ENCODE measurements at regions of chr12 and their contacts with region 1.

Region 1: DNA sequence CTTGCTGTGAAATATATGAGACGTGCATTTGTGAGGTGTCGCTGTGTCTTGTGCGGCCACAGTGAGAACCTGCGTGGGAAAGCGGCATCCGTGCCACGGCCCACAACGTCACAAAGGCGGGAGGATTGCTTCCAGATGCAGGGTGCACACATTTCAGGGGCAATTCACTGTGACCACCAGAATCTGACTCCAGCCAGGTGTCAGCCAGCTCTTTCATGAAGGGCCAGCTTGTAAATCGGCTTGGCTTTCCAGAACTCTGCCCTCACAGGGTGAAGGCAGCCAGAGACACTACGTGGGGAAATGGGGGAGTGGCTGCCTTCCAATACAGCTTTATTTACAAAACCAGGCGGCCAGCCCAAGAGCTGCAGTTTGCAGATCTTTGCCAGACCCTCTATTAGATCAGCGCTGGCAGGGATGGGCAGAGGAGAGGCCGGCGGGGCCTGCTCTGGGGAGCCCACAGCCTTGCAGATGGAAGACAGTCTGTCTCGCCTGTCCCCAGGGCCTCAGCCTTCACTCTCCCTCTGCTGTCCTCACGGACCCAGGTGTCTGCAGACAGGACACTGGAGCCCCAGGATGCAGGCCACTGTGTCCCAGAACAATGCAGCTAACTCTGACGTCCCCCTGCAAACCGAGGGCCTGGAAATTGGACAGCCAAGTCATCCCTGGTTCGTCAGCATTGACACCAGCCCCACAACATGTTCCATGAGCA is 53.5 kb downstream of the ADGRD1 start:
- DNase-seq: peak; percentile 92
- H3K4me3 ChIP-seq: no peak overlapping the region
- H3K27ac ChIP-seq: peak overlapping the region; percentile 31 to 82 (median 78)
- H3K4me1 ChIP-seq: peaks cover 0 to 76% (median 55%) of the 10 kb centered on the region in 4 donors
- H3K27me3 ChIP-seq: no peaks in the 10 kb centered on the region
- CTCF ChIP-seq: no peak
- EP300 ChIP-seq: peak; percentile 36 to 75 (median 47)
- POLR2A ChIP-seq: no peak

Region 2: GRCh38 chr12:130961921-130962451 is 45.2 kb before region 1 on chr12:
- intact Hi-C with region 1: loop called (anchors 2 kb)
- DNase-seq: peak; percentile 91
- H3K4me3 ChIP-seq: no peak overlapping the region
- H3K27ac ChIP-seq: peak overlapping the region; percentile 63 to 78 (median 74)
- H3K4me1 ChIP-seq: peaks cover 0 to 37% (median 18%) of the 10 kb centered on the region in 4 donors
- H3K27me3 ChIP-seq: no peaks in the 10 kb centered on the region
- CTCF ChIP-seq: no peak
- EP300 ChIP-seq: peak in 3 of 4 donors; percentile 53 to 83 (median 73)
- POLR2A ChIP-seq: no peak

Region 3: DNA sequence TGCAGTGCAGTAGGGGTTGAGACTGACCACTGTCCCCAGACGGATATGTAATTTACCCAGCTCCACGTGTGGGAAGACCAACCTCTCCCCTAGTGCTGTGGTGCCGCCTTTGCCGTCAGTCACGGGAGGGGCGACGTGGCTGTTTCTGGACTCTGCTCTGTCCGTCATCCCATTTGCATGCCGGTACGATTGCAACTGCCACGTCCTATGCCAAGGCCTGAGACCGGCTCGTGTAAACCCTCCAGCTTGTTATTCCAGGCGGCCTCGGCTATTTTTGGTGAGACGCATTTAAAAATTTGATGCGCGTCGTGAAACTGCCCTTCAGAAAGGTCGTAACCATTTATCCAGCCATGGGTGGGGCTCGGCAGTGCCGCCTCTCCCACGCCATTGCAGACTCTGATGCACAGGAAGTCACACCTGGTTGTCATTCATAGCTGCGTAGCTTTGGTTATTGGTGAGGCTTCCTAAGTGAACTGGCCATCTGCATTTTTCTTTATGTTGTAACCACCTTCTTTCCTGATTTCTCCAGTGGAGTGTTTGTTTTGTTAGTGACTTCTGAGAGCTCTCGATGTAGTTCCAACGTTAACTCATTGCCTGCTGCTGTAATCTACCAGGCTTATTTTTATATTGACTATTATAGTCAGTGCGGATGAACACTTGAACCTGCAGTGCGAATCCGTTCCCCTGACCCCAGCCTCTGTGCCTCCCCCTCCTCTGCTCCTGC is 21.6 kb after region 1 on chr12:
- intact Hi-C with region 1: loop called (anchors 2 kb)
- DNase-seq: no peak
- H3K4me3 ChIP-seq: no peak overlapping the region
- H3K27ac ChIP-seq: peak overlapping the region in 1 of 4 donors; percentile 50
- H3K4me1 ChIP-seq: peaks cover 0 to 17% (median 16%) of the 10 kb centered on the region in 4 donors
- H3K27me3 ChIP-seq: peaks cover 0 to 2% (median 0%) of the 10 kb centered on the region in 3 donors
- CTCF ChIP-seq: no peak
- EP300 ChIP-seq: no peak
- POLR2A ChIP-seq: no peak

Region 4: DNA sequence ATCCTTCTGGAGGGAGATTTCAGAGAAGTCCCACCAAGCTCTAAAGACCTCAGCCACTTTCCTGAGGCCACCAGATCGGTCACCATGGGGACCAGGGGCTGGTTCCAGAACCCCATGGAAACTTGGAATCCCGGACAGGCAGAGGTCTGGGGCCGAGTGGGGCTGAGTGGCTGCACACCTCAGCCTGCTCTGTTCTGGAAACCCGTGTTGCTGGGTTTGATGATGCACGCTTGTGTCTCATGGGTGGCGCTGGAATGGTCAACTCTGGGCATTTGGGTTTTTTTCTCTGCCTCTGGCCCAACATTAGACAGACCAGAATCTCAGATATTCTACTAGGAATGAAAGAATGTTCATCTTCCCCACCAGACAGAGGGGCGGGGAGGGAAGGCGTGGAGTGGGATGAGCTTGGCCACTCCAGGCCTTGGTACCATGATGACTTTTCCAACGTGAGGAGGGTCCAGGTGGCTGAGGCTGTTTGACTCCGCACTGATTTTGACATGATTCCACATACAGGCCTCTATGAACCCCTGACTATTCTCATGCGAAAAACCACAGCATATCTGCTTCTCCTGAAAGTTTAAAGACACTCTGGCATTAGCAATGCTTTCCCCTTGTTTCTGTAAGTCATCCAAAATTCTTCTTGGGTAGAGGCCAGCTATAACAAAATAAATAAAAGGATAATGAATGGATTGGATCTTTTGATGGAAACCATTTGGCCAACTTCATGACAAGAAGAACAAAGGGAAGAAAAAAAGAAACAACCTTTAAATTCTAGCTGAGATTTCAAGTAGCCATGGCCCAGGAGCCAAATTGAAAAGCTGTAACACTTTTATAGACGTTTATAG is 61.1 kb after region 1 on chr12:
- intact Hi-C with region 1: loop called (anchors 1 kb)
- DNase-seq: peak; percentile 61
- H3K4me3 ChIP-seq: no peak overlapping the region
- H3K27ac ChIP-seq: peak overlapping the region; percentile 31 to 79 (median 69)
- H3K4me1 ChIP-seq: peaks cover 0 to 30% (median 21%) of the 10 kb centered on the region in 4 donors
- H3K27me3 ChIP-seq: no peaks in the 10 kb centered on the region
- CTCF ChIP-seq: no peak
- EP300 ChIP-seq: peak; percentile 13 to 79 (median 30)
- POLR2A ChIP-seq: no peak

Region 5: DNA sequence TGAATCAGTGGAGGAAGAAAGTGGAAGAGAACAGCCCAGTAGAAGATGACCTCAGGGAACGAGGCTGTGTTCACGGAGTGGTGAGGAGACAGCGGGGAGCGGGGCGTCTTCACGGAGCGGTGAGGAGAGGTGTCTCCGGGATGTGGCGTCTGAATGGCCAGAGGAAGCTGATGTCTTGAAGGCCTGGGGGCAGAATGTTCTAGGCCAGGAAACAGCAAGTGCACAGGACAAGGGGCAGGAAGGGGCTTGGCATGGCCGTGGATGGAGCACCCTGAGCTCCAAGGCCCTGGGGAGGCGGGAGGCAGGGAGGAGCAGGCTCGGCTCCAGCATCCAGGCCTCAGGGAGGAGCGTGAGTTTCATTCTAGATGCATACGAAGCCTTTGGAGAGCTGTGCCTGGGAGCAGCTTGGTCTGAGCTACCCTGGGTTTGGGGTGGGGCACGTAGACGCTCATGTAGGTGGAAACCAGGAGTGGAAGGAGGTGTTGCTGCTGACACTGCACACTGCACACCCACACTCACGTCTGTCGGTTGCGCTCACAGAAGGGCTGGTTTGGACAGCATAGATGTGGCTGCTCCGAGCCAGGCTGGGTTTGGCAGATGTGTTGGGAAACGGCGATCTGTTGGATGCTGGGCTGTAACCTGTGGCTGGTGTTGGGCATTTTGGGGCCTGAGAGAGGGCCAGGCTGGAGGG is 78.1 kb after region 1 on chr12:
- intact Hi-C with region 1: no loop called
- DNase-seq: no peak
- H3K4me3 ChIP-seq: no peak overlapping the region
- H3K27ac ChIP-seq: no peak overlapping the region
- H3K4me1 ChIP-seq: no peaks in the 10 kb centered on the region
- H3K27me3 ChIP-seq: no peaks in the 10 kb centered on the region
- CTCF ChIP-seq: no peak
- EP300 ChIP-seq: no peak
- POLR2A ChIP-seq: no peak